GM10248 (cell line): ENCODE measurements at regions of chr12 and their contacts with region 1.

Region 1: DNA sequence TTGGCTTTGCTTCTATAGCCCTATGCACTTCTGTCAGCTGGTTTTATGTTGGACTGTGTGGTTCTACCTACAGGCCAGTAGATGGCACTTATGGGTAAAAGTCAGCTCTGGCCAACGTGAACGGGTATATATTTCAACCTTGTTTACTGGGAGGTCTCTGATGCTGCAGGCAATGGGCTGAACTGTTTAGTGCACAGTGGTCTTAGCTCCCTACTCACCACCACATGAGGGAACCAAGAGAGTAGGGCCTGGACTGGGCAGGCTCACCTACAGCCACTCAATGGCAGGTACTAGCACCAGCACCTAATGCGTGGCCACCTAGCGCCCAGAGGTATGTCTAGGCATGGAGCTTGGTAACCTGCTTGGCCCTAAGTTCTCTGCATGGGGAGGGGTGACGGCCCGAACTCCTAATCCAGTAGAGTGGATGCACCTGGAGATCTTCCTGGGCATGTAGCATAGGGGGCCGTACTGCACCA is 481.8 kb downstream of the TMEM117 start:
- DNase-seq: peak; percentile 22
- CTCF ChIP-seq: peak; percentile 58

Region 2: DNA sequence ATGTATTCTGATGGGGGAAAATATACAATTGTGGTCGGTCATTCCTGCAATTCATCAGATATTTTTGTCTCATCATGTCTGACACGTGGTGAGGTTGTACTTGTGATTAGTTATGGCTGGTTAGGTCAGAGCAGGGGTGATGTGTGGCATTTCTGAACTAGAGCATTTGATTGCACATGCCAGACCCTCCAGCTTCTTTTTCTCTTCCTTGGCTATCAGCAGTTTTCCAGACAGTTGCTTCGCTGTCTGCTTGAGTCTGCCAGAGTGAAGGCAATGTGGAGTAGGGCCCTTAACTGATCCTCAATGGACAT is 455.9 kb before region 1 on chr12:
- CTCF ChIA-PET with region 1: no interaction called
- POLR2A ChIA-PET with region 1: no interaction called
- DNase-seq: no peak
- CTCF ChIP-seq: no peak

Region 3: DNA sequence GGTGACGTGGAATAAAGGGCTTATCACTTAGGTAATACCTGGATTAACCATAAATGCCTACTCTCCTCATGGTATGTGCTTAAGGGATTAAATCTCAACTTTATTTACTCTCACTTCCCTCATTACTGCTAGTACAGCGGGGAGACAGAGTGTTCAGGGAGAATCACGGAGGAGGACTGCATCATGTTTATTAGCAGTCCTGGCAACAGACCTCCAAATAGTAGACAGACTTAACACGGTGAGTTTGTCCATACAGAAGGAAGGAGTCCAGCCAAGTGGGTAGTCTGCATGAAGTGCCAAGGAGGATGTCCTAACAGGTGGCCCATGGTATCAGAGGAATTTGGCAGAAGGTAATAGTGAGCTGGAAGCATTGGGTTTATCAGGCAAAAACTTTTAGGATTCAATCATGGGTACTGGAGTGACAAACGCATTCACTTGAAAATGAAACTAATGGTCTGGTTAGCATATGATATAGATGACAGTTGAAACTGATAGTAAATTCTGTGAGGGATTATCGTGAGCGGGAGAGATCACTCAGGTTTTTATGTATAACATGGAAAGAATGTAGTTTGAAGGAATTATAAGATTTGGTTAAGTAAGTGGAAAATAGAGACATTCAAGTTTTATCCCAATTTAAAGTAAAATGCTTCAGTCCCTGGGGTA is 10.1 kb before region 1 on chr12:
- CTCF ChIA-PET with region 1: interaction called, 11 read pairs
- POLR2A ChIA-PET with region 1: no interaction called
- DNase-seq: no peak
- CTCF ChIP-seq: no peak